ENCODE measurements at regions of chr11 and their contacts with region 1.

Region 1: GRCh38 chr11:57335343-57336110 is at the start of gene SSRP1:
- DNase-seq: peak; percentile 95
- H3K4me3 ChIP-seq: peak within 1 kb of the TSS; percentile 69 to 87
- H3K27ac ChIP-seq: peak within 1 kb of the TSS; percentile 45 to 85
- H3K4me1 ChIP-seq: peaks cover 7 to 15% of the 10 kb centered on the region in 2 experiments; a peak in 3 of 4 replicates
- H3K27me3 ChIP-seq: no peaks in the 10 kb centered on the region
- CTCF ChIP-seq: no peak
- EP300 ChIP-seq: no peak
- RAD21 ChIP-seq: no peak
- polyA plus RNA-seq, gene SSRP1: 122 and 137 TPM in 2 replicates

Region 2: GRCh38 chr11:57324886-57325734 is 10.4 kb before region 1 on chr11 and contains the start of gene TNKS1BP1:
- CTCF ChIA-PET with region 1: interaction called, 5 read pairs
- POLR2A ChIA-PET with region 1: interaction called, 29 read pairs
- DNase-seq: peak; percentile 94
- H3K4me3 ChIP-seq: peak within 1 kb of the TSS; percentile 84 to 86
- H3K27ac ChIP-seq: peak within 1 kb of the TSS; percentile 89 to 90
- H3K4me1 ChIP-seq: peaks cover 40 to 42% of the 10 kb centered on the region in 2 experiments
- H3K27me3 ChIP-seq: no peaks in the 10 kb centered on the region
- CTCF ChIP-seq: peak; percentile 19; the same call in 1 of the 2 replicates
- EP300 ChIP-seq: no peak
- RAD21 ChIP-seq: no peak
- polyA plus RNA-seq, gene TNKS1BP1: 29.6 and 43.3 TPM in 2 replicates

Measured in SK-N-SH (cell line).